Caco-2 (cell line): ENCODE measurements at regions of chr7 and their contacts with region 1.

Region 1: GRCh38 chr7:55255496-55256435 is 109.4 kb upstream of the LANCL2 start:
- DNase-seq: peak; percentile 78 to 90
- H3K4me3 ChIP-seq: peak overlapping the region; percentile 75
- H3K4me3 Mint-ChIP-seq: peak overlapping the region; percentile 86
- H3K27ac Mint-ChIP-seq: peak overlapping the region; percentile 42
- H3K4me1 ChIP-seq: peaks cover 9% of the 10 kb centered on the region; the same call in 1 of the 2 replicates
- H3K4me1 Mint-ChIP-seq: no peaks in the 10 kb centered on the region
- H3K27me3 ChIP-seq: no peaks in the 10 kb centered on the region
- H3K27me3 Mint-ChIP-seq: peaks cover 8% of the 10 kb centered on the region
- CTCF ChIP-seq: peak; percentile 85 to 91

Region 2: DNA sequence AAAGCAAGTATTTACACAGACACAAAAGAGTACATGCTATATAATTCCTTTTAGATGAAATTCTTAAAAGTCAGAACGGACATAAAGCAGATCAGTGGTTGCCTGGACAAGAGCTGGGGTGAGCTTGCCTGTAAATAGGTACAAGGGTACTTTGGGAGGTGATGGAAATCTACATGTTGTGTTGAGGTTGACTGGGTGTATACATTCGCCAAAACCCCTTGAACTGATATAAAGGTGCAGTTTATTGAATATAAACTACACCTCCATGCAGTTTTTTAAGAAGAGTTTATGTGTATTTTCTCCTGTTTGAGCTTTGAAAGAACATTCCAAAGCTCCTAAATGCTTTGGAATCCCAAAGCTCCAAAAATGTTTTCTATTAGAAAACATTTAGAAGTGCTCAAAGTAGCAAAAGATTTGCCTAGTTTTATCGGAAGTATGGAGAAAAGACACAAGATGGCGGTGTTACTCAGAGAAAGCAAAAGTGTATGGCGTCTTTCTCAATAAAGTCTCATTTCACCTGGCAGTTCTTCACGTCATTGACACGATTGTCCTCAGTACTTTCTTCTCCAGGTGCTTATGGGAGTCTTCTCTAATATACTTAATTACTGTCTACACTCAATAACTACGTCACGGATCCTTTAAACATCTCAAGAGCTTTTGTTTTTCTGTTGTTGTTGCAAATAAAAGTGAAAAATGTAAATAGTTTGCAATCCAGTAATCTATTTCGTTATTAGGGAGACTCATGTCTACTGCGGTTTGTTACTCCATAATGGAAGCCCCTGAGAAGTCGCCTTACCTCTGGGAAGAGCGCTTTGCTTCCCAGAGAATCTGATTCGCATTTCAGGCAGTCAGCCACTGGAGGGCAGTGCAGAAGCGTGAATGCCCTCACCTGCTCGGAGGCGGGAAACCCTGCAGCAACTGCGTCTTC is 482.0 kb before region 1 on chr7:
- CTCF ChIA-PET with region 1: interaction called, 37 read pairs
- POLR2A ChIA-PET with region 1: no interaction called
- intact Hi-C with region 1: loop called (anchors 1 kb)
- DNase-seq: peak; percentile 88 to 89
- H3K4me3 ChIP-seq: peak overlapping the region; percentile 28
- H3K4me3 Mint-ChIP-seq: peak overlapping the region; percentile 70
- H3K27ac Mint-ChIP-seq: peak overlapping the region; percentile 77
- H3K4me1 ChIP-seq: no peaks in the 10 kb centered on the region
- H3K4me1 Mint-ChIP-seq: no peaks in the 10 kb centered on the region
- H3K27me3 ChIP-seq: no peaks in the 10 kb centered on the region
- H3K27me3 Mint-ChIP-seq: peaks cover 18% of the 10 kb centered on the region
- CTCF ChIP-seq: peak; percentile 80 to 92

Region 3: GRCh38 chr7:54839538-54840213 is 416.1 kb before region 1 on chr7:
- CTCF ChIA-PET with region 1: interaction called, 4 read pairs
- POLR2A ChIA-PET with region 1: no interaction called
- intact Hi-C with region 1: loop called (anchors 2 kb)
- DNase-seq: peak; percentile 56 to 74
- H3K4me3 ChIP-seq: no peak overlapping the region
- H3K4me3 Mint-ChIP-seq: no peak overlapping the region
- H3K27ac Mint-ChIP-seq: no peak overlapping the region
- H3K4me1 ChIP-seq: no peaks in the 10 kb centered on the region
- H3K4me1 Mint-ChIP-seq: no peaks in the 10 kb centered on the region
- H3K27me3 ChIP-seq: no peaks in the 10 kb centered on the region
- H3K27me3 Mint-ChIP-seq: peaks cover 5% of the 10 kb centered on the region
- CTCF ChIP-seq: peak; percentile 44 to 81

Region 4: GRCh38 chr7:55018361-55019190 is 237.2 kb before region 1 on chr7 and contains the start of gene EGFR:
- CTCF ChIA-PET with region 1: interaction called, 14 read pairs
- POLR2A ChIA-PET with region 1: no interaction called
- intact Hi-C with region 1: loop called (anchors 2 kb)
- DNase-seq: peak; percentile 79 to 83
- H3K4me3 ChIP-seq: peak within 1 kb of the TSS; percentile 86
- H3K4me3 Mint-ChIP-seq: peak within 1 kb of the TSS; percentile 81
- H3K27ac Mint-ChIP-seq: peak within 1 kb of the TSS; percentile 59
- H3K4me1 ChIP-seq: peaks cover 32% of the 10 kb centered on the region
- H3K4me1 Mint-ChIP-seq: peaks cover 16% of the 10 kb centered on the region
- H3K27me3 ChIP-seq: no peaks in the 10 kb centered on the region
- H3K27me3 Mint-ChIP-seq: no peaks in the 10 kb centered on the region
- CTCF ChIP-seq: no peak
- total RNA-seq, gene EGFR: 55.1 and 60.1 TPM in 2 replicates

Region 5: GRCh38 chr7:55140221-55140940 is 115.4 kb before region 1 on chr7:
- CTCF ChIA-PET with region 1: no interaction called
- POLR2A ChIA-PET with region 1: no interaction called
- intact Hi-C with region 1: loop called (anchors 1 kb)
- DNase-seq: no peak
- H3K4me3 ChIP-seq: no peak overlapping the region
- H3K4me3 Mint-ChIP-seq: no peak overlapping the region
- H3K27ac Mint-ChIP-seq: no peak overlapping the region
- H3K4me1 ChIP-seq: no peaks in the 10 kb centered on the region; the same call in 1 of the 2 replicates
- H3K4me1 Mint-ChIP-seq: no peaks in the 10 kb centered on the region
- H3K27me3 ChIP-seq: no peaks in the 10 kb centered on the region
- H3K27me3 Mint-ChIP-seq: no peaks in the 10 kb centered on the region
- CTCF ChIP-seq: no peak

Region 6: GRCh38 chr7:55185941-55186609 is 69.7 kb before region 1 on chr7:
- CTCF ChIA-PET with region 1: interaction called, 37 read pairs
- POLR2A ChIA-PET with region 1: interaction called, 8 read pairs
- intact Hi-C with region 1: loop called (anchors 1 kb)
- DNase-seq: peak; percentile 42 to 76
- H3K4me3 ChIP-seq: no peak overlapping the region
- H3K4me3 Mint-ChIP-seq: peak overlapping the region; percentile 91
- H3K27ac Mint-ChIP-seq: peak overlapping the region; percentile 85
- H3K4me1 ChIP-seq: peaks cover 77% of the 10 kb centered on the region
- H3K4me1 Mint-ChIP-seq: peaks cover 65% of the 10 kb centered on the region
- H3K27me3 ChIP-seq: no peaks in the 10 kb centered on the region
- H3K27me3 Mint-ChIP-seq: no peaks in the 10 kb centered on the region
- CTCF ChIP-seq: no peak